ENCODE measurements at regions of chr6 and their contacts with region 1.

Region 1: GRCh38 chr6:149565527-149566409 is at the start of gene GINM1:
- DNase-seq: peak; percentile 98
- ATAC-seq: peak; percentile 83
- H3K4me3 ChIP-seq: peak within 1 kb of the TSS; percentile 83 to 100 (median 96)
- H3K4me3 Mint-ChIP-seq: peak within 1 kb of the TSS; percentile 99
- H3K27ac ChIP-seq: peak within 1 kb of the TSS; percentile 84 to 92
- H3K27ac Mint-ChIP-seq: peak within 1 kb of the TSS; percentile 98
- H3K4me1 ChIP-seq: peaks cover 13 to 26% of the 10 kb centered on the region in 2 donors
- H3K4me1 Mint-ChIP-seq: peaks cover 23% of the 10 kb centered on the region
- H3K27me3 ChIP-seq: no peaks in the 10 kb centered on the region
- H3K27me3 Mint-ChIP-seq: no peaks in the 10 kb centered on the region
- CTCF ChIP-seq: peak; percentile 77
- total RNA-seq, gene GINM1: 22.1 and 23.0 TPM in 2 replicates

Region 2: DNA sequence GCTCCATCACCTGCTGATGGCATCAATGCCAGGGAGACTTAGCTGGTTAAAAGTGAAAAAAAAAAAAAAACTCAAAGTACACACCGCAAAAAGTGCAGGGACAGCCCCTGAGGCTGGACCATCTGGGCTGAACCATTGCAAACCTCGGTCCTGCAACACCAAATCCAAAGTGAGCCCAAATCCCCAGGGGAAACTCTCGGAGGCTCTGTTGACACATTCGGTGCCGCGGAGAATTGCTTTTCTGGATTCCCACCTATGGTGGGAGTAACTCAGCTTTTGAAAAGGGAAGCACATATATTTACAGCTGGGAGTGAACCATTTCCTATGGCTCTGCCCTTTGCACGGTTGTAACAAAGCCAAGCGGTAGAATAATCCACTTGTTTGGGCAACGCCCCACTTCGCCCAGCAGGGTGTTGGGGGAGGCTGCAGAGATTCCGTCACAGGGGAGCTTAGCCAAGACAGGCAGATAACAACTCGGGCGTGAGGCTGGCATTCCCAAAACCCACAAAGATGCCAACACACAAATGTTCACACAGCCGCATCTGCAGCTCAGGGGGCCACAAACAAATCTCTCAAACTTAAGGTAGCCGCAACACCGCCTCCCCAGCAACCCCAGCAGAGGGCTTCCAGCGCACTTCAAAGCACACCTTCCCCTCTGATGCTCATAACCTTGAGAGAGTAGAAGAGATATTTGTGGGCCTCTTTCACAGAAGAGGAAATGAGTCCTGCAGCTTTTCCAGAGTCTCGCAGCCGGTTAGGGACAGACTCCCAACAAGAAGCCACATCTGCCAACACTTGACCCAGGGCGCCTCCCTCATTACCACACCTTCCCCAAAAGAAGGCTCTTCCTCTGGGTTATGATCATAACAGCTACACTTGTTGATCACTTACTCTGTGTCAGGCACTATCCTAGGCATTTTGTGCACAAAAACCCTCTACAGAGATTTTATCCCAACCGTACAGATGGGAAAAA is 92.4 kb before region 1 on chr6:
- CTCF ChIA-PET with region 1: no interaction called
- POLR2A ChIA-PET with region 1: no interaction called
- intact Hi-C with region 1: loop called (anchors 1 kb)
- DNase-seq: peak; percentile 65
- ATAC-seq: peak; percentile 34
- H3K4me3 ChIP-seq: peak overlapping the region in 4 of 5 experiments; percentile 5 to 55 (median 38)
- H3K4me3 Mint-ChIP-seq: peak overlapping the region; percentile 89
- H3K27ac ChIP-seq: peak overlapping the region; percentile 67 to 84
- H3K27ac Mint-ChIP-seq: peak overlapping the region; percentile 94
- H3K4me1 ChIP-seq: peaks cover 87 to 98% of the 10 kb centered on the region in 2 donors
- H3K4me1 Mint-ChIP-seq: peaks cover 84% of the 10 kb centered on the region
- H3K27me3 ChIP-seq: no peaks in the 10 kb centered on the region
- H3K27me3 Mint-ChIP-seq: no peaks in the 10 kb centered on the region
- CTCF ChIP-seq: peak; percentile 48

Region 3: GRCh38 chr6:149648148-149649145 is 82.7 kb after region 1 on chr6 and contains the start of gene KATNA1:
- CTCF ChIA-PET with region 1: no interaction called
- POLR2A ChIA-PET with region 1: no interaction called
- intact Hi-C with region 1: loop called (anchors 1 kb)
- DNase-seq: peak; percentile 89
- ATAC-seq: peak; percentile 94
- H3K4me3 ChIP-seq: peak within 1 kb of the TSS; percentile 70 to 93 (median 85)
- H3K4me3 Mint-ChIP-seq: peak within 1 kb of the TSS; percentile 96
- H3K27ac ChIP-seq: peak within 1 kb of the TSS; percentile 47 to 83
- H3K27ac Mint-ChIP-seq: peak within 1 kb of the TSS; percentile 91
- H3K4me1 ChIP-seq: peaks cover 17 to 18% of the 10 kb centered on the region in 2 donors
- H3K4me1 Mint-ChIP-seq: peaks cover 37% of the 10 kb centered on the region
- H3K27me3 ChIP-seq: no peaks in the 10 kb centered on the region
- H3K27me3 Mint-ChIP-seq: no peaks in the 10 kb centered on the region
- CTCF ChIP-seq: no peak
- total RNA-seq, gene KATNA1: 18.5 and 19.8 TPM in 2 replicates

Region 4: GRCh38 chr6:149746147-149746946 is 180.6 kb after region 1 on chr6 and contains the start of gene NUP43:
- CTCF ChIA-PET with region 1: no interaction called
- POLR2A ChIA-PET with region 1: no interaction called
- intact Hi-C with region 1: loop called (anchors 1 kb)
- DNase-seq: peak; percentile 93
- ATAC-seq: peak; percentile 67
- H3K4me3 ChIP-seq: peak within 1 kb of the TSS; percentile 74 to 97 (median 80)
- H3K4me3 Mint-ChIP-seq: peak within 1 kb of the TSS; percentile 96
- H3K27ac ChIP-seq: peak within 1 kb of the TSS; percentile 63 to 65
- H3K27ac Mint-ChIP-seq: peak within 1 kb of the TSS; percentile 90
- H3K4me1 ChIP-seq: peaks cover 23 to 29% of the 10 kb centered on the region in 2 donors
- H3K4me1 Mint-ChIP-seq: peaks cover 28% of the 10 kb centered on the region
- H3K27me3 ChIP-seq: no peaks in the 10 kb centered on the region
- H3K27me3 Mint-ChIP-seq: no peaks in the 10 kb centered on the region
- CTCF ChIP-seq: peak; percentile 71
- total RNA-seq, gene NUP43: 75.7 and 77.7 TPM in 2 replicates

Region 5: DNA sequence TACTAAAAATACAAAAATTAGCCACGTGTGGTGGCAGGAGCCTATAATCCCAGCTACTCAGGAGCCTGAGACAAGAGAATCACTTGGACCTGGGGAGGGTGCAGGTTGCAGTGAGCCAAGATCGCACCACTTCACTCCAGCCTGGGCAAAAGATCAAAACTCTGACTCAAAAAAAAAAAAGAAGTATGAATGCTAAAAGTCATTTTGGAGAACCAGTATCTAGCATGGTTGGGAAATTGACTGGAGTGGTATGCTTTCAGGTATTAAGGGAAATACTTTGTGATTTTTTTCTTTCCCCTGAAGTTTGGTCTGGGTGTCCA is 213.8 kb after region 1 on chr6:
- CTCF ChIA-PET with region 1: no interaction called
- POLR2A ChIA-PET with region 1: no interaction called
- intact Hi-C with region 1: no loop called
- DNase-seq: no peak
- ATAC-seq: no peak
- H3K4me3 ChIP-seq: no peak overlapping the region
- H3K4me3 Mint-ChIP-seq: no peak overlapping the region
- H3K27ac ChIP-seq: no peak overlapping the region
- H3K27ac Mint-ChIP-seq: no peak overlapping the region
- H3K4me1 ChIP-seq: no peaks in the 10 kb centered on the region
- H3K4me1 Mint-ChIP-seq: no peaks in the 10 kb centered on the region
- H3K27me3 ChIP-seq: no peaks in the 10 kb centered on the region
- H3K27me3 Mint-ChIP-seq: no peaks in the 10 kb centered on the region
- CTCF ChIP-seq: no peak

Region 6: DNA sequence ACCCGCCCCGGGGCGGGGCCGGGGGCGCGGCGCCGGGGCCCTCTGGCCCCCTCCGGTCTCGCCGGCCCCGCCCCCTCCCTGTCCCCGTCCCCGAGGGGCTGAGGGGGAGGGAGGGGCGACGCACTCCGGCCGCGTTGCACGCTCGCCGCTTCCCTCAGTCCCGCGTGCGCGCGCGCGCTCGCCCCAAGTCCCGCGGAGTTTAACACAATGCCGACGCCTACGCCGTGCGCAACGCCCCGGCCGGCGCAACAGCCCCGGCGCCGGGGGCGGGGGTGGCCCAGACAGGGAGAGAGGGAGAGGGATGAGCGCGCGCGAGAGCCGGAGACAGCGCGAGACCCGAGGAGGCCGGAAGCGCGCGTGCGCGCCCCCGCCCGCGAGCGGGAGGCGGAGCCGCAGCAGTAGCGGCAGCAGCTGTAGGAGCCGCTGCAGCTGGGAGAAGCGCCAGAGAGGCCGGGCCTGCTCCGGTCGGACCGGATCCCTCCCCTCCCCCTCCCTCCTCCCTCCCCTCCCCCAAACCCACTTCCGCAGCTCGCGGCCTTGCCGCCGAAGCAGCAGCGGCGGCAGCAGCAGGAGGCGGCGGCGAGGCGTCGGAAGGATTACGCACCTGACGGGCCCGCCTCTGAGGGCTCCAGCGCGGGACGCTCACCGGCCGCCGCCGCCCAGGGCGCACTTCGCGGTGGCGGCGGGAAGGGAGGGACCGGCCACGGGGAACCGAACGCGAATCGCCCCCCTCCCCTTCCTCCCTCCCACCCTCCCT is 1824.7 kb after region 1 on chr6:
- CTCF ChIA-PET with region 1: no interaction called
- POLR2A ChIA-PET with region 1: no interaction called
- intact Hi-C with region 1: loop called (anchors 5 kb)
- DNase-seq: peak; percentile 100
- ATAC-seq: peak; percentile 73
- H3K4me3 ChIP-seq: peak overlapping the region in 4 of 5 experiments; percentile 67 to 95 (median 82)
- H3K4me3 Mint-ChIP-seq: peak overlapping the region; percentile 99
- H3K27ac ChIP-seq: peak overlapping the region; percentile 77 to 97
- H3K27ac Mint-ChIP-seq: peak overlapping the region; percentile 98
- H3K4me1 ChIP-seq: peaks cover 38 to 39% of the 10 kb centered on the region in 2 donors
- H3K4me1 Mint-ChIP-seq: peaks cover 46% of the 10 kb centered on the region
- H3K27me3 ChIP-seq: no peaks in the 10 kb centered on the region
- H3K27me3 Mint-ChIP-seq: no peaks in the 10 kb centered on the region
- CTCF ChIP-seq: no peak

Measured in B cell (primary cell).